GM12878 (cell line): ENCODE measurements at regions of chr11 and their contacts with region 1.

Region 1: GRCh38 chr11:97092823-97093222 is 703.0 kb downstream of the JRKL start:
- DNase-seq: no peak
- ATAC-seq: peak; percentile 51
- H3K4me3 ChIP-seq: no peak overlapping the region
- H3K27ac ChIP-seq: no peak overlapping the region
- H3K4me1 ChIP-seq: no peaks in the 10 kb centered on the region
- H3K27me3 ChIP-seq: no peaks in the 10 kb centered on the region
- CTCF ChIP-seq: no peak; a peak in 1 of 6 replicates
- EP300 ChIP-seq: no peak
- POLR2A ChIP-seq: no peak
- RAD21 ChIP-seq: no peak

Region 2: GRCh38 chr11:95435628-95436353 is 1657.0 kb before region 1 on chr11:
- CTCF ChIA-PET with region 1: no interaction called
- POLR2A ChIA-PET with region 1: no interaction called
- RAD21 ChIA-PET with region 1: no interaction called
- SMC1A ChIA-PET with region 1: no interaction called
- in situ Hi-C with region 1: no loop called
- intact Hi-C with region 1: no loop called
- DNase-seq: no peak
- ATAC-seq: no peak
- H3K4me3 ChIP-seq: no peak overlapping the region
- H3K27ac ChIP-seq: no peak overlapping the region
- H3K4me1 ChIP-seq: no peaks in the 10 kb centered on the region
- H3K27me3 ChIP-seq: peaks cover 0 to 2% of the 10 kb centered on the region in 2 experiments; a peak in 2 of 4 replicates
- CTCF ChIP-seq: no peak
- EP300 ChIP-seq: no peak
- POLR2A ChIP-seq: no peak
- RAD21 ChIP-seq: no peak

Region 3: DNA sequence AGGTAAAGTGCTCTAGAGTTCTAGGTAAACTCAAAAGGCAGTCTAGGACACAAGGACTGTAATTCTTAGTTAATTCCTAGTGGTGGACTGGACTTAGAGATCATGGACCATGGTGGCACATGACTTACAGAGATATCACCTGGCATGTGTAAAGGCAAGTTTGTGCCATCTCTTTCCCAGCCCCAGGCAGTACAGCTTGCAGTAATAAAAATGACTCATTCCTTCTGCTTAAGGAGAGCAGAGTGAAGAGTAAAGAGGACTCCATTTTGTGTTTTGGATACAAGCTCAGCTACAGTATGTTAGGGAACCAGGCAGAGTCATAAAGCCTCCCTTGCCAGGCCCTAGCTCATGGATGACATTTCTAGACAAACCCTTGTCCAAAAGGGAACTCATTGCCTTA is 73.1 kb before region 1 on chr11:
- CTCF ChIA-PET with region 1: no interaction called
- POLR2A ChIA-PET with region 1: no interaction called
- RAD21 ChIA-PET with region 1: no interaction called
- SMC1A ChIA-PET with region 1: no interaction called
- in situ Hi-C with region 1: no loop called
- intact Hi-C with region 1: no loop called
- DNase-seq: no peak
- ATAC-seq: no peak
- H3K4me3 ChIP-seq: no peak overlapping the region
- H3K27ac ChIP-seq: no peak overlapping the region
- H3K4me1 ChIP-seq: no peaks in the 10 kb centered on the region
- H3K27me3 ChIP-seq: no peaks in the 10 kb centered on the region
- CTCF ChIP-seq: no peak
- EP300 ChIP-seq: no peak
- POLR2A ChIP-seq: no peak
- RAD21 ChIP-seq: no peak

Region 4: GRCh38 chr11:97110376-97110775 is 17.6 kb after region 1 on chr11:
- CTCF ChIA-PET with region 1: interaction called, 3 read pairs
- POLR2A ChIA-PET with region 1: no interaction called
- RAD21 ChIA-PET with region 1: interaction called, 7 read pairs
- SMC1A ChIA-PET with region 1: interaction called, 20 read pairs
- in situ Hi-C with region 1: no loop called
- intact Hi-C with region 1: no loop called
- DNase-seq: no peak
- ATAC-seq: no peak
- H3K4me3 ChIP-seq: no peak overlapping the region
- H3K27ac ChIP-seq: no peak overlapping the region
- H3K4me1 ChIP-seq: no peaks in the 10 kb centered on the region
- H3K27me3 ChIP-seq: no peaks in the 10 kb centered on the region
- CTCF ChIP-seq: no peak
- EP300 ChIP-seq: no peak
- POLR2A ChIP-seq: no peak
- RAD21 ChIP-seq: no peak

Region 5: DNA sequence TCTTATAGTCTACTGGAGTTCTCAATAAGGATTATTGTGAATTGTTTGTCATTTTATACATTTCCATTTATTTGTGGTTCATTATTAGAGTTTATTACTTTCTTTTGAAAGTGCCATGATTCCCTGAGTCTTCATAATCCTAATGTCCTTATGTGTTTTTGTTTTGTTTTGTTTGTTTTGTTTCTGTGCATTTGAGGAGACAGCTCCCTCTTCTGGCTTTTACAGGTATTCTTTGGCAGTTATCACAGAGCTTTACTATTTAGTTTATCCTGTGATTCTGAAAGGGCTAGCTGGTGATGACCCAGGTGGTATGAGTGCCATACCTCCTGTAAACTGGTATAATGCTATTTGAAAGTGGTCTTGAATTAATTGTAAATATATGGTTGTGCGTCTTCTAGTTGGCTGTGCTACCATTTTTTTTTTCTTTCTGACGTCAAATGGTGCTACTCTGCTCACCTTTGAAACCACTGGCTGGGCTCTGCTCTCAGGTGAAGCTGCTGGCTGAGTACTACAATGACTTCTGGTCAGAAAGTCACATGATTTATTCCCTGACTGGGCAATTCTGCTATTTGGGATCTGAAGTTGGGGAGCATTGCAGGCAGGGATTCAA is 48.2 kb after region 1 on chr11:
- CTCF ChIA-PET with region 1: interaction called, 12 read pairs
- POLR2A ChIA-PET with region 1: no interaction called
- RAD21 ChIA-PET with region 1: interaction called, 22 read pairs
- SMC1A ChIA-PET with region 1: interaction called, 11 read pairs
- in situ Hi-C with region 1: no loop called
- intact Hi-C with region 1: no loop called
- DNase-seq: no peak
- ATAC-seq: peak; percentile 77
- H3K4me3 ChIP-seq: no peak overlapping the region
- H3K27ac ChIP-seq: no peak overlapping the region
- H3K4me1 ChIP-seq: no peaks in the 10 kb centered on the region
- H3K27me3 ChIP-seq: no peaks in the 10 kb centered on the region
- CTCF ChIP-seq: peak; percentile 50 to 56 (median 55); a peak in 5 of 6 replicates
- EP300 ChIP-seq: no peak
- POLR2A ChIP-seq: no peak
- RAD21 ChIP-seq: peak; percentile 70

Region 6: GRCh38 chr11:97325693-97326092 is 232.9 kb after region 1 on chr11:
- CTCF ChIA-PET with region 1: no interaction called
- POLR2A ChIA-PET with region 1: no interaction called
- RAD21 ChIA-PET with region 1: no interaction called
- SMC1A ChIA-PET with region 1: no interaction called
- in situ Hi-C with region 1: no loop called
- intact Hi-C with region 1: no loop called
- DNase-seq: no peak
- ATAC-seq: peak; percentile 34; the same call in 1 of the 3 replicates
- H3K4me3 ChIP-seq: no peak overlapping the region
- H3K27ac ChIP-seq: no peak overlapping the region
- H3K4me1 ChIP-seq: no peaks in the 10 kb centered on the region
- H3K27me3 ChIP-seq: no peaks in the 10 kb centered on the region
- CTCF ChIP-seq: no peak
- EP300 ChIP-seq: no peak
- POLR2A ChIP-seq: no peak
- RAD21 ChIP-seq: no peak

Region 7: GRCh38 chr11:97356144-97356543 is 263.3 kb after region 1 on chr11:
- CTCF ChIA-PET with region 1: no interaction called
- POLR2A ChIA-PET with region 1: no interaction called
- RAD21 ChIA-PET with region 1: no interaction called
- SMC1A ChIA-PET with region 1: no interaction called
- in situ Hi-C with region 1: no loop called
- intact Hi-C with region 1: no loop called
- DNase-seq: no peak
- ATAC-seq: no peak
- H3K4me3 ChIP-seq: no peak overlapping the region
- H3K27ac ChIP-seq: no peak overlapping the region
- H3K4me1 ChIP-seq: no peaks in the 10 kb centered on the region
- H3K27me3 ChIP-seq: no peaks in the 10 kb centered on the region; a peak in 1 of 4 replicates
- CTCF ChIP-seq: no peak
- EP300 ChIP-seq: no peak
- POLR2A ChIP-seq: no peak
- RAD21 ChIP-seq: no peak